Right ventricle myocardium superior (tissue), 1 donor: ENCODE measurements at regions of chr11 and their contacts with region 1.

Region 1: DNA sequence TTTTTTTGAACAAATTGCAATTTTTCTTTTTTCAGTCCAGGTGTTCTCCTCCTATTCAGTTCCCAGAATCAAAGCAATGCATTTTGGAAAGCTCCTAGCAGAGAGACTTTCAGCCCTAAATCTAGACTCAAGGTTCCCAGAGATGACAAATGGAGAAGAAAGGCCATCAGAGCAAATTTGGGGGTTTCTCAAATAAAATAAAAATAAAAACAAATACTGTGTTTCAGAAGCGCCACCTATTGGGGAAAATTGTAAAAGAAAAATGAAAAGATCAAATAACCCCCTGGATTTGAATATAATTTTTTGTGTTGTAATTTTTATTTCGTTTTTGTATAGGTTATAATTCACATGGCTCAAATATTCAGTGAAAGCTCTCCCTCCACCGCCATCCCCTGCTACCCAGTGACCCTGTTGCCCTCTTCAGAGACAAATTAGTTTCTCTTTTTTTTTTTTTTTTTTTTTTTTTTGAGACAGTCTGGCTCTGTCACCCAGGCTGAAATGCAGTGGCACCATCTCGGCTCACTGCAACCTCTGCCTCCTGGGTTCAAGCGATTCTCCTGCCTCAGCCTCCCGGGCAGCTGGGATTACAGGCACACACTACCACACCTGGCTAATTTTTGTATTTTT is 6.2 kb upstream of the UBE4A start:
- DNase-seq: no peak
- ATAC-seq: no peak

Region 2: DNA sequence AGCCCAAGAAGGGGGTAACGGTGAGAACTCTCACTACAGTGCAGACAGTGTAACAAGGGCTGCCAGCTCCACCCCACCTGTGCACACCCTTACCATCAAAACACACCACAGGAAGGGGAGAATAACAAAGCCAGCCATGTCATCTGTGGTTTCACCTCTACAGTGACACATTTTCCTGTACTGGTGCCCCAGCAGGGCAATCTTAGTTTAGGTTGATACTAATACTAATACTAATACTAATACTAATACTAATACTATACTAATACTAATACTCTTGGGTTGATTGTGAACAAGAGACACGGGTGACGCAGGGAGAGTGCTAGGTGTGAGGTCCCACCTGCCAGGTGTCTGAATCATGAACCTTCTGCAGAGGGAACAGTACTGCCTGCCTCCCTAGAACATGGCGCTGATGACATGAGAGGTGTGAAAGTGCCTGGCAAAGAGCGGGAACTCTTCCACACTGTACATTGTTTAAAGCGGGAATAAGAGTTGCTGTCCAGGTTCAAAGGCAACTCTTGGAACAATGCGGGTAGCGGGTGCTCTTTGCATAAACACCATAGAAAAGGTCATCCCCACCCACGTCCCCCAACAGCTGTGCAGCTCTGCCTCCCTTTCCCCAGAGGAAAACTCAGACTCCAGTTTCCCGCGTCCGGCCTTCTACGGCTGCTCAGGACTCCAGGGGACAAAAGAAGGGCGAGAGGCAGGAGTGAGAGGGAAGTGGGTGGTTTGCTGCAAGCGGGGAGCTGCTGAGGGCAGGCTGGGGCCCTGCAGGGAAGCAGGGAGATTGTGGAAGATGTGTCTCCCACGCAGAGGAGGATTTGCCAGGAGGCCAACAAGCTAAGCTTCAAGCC is 301.4 kb before region 1 on chr11:
- intact Hi-C with region 1: no loop called
- DNase-seq: no peak
- ATAC-seq: no peak

Region 3: GRCh38 chr11:118198370-118198769 is 154.8 kb before region 1 on chr11:
- intact Hi-C with region 1: loop called (anchors 5 kb)
- DNase-seq: peak; percentile 90
- ATAC-seq: peak; percentile 66

Region 4: GRCh38 chr11:118295834-118296454 is 57.3 kb before region 1 on chr11:
- intact Hi-C with region 1: loop called (anchors 5 kb)
- DNase-seq: no peak
- ATAC-seq: peak; percentile 54